SK-N-SH (cell line): ENCODE measurements at regions of chr15 and their contacts with region 1.

Region 1: DNA sequence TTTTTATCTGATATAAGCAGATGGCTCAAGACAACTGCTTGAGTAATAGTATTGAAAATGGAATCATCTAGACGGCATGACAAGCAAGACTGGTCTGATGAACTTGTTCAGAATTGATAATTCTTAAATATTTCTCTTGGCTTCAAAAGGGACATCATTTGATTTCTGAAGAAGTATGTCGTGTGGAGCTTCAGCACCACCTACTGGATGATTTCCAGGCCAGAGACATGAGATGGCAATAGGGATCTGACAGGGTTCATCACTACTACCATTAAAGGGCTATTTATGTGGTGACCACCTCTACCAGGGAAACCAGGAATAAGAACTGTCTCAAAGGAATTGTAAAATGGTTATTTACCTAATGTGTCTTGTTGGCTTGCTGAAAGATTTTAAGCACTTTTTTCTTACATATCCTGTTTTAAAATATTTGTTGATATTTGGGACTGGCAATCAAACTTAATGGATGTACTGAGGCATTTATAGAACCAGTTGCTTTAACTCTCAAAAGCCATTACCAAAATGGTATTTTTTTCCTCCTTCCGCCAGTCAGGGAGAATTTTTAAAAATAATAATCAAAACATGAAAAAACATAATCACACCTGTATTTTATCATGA is 99.5 kb upstream of the FAM98B start:
- DNase-seq: peak; percentile 53
- H3K4me3 ChIP-seq: no peak overlapping the region; a peak in 1 of 4 replicates
- H3K27ac ChIP-seq: no peak overlapping the region; a peak in 1 of 4 replicates
- H3K4me1 ChIP-seq: no peaks in the 10 kb centered on the region; a peak in 1 of 4 replicates
- H3K27me3 ChIP-seq: no peaks in the 10 kb centered on the region
- CTCF ChIP-seq: peak; percentile 85
- EP300 ChIP-seq: no peak
- RAD21 ChIP-seq: peak; percentile 91

Region 2: DNA sequence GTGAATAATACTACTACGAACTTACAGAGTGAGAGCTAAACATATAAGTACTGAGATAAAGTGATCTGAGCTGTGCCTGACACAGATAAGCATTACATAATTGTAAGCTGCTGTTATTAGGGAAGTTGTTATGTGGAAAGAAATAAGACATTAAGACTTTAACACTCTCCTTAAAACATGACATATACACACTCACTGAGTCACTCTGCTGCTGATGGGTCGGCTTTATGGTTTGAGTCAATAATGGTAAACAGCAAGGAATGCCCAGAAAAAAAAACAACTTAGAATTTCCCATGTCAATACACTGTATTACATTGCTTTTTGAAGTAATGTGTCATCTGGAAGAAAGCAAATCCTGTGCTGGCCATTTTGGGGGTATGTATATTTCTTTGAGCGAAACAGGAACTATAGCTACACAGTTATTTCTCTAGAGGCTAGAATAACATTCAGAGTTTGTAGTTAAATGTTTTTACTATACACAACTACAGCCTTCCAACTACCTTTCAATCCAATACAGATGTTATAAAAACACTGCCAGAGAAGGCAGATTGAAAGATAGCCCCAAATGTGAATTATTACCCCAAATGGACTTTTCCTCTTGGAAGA is 124.6 kb before region 1 on chr15:
- CTCF ChIA-PET with region 1: no interaction called
- POLR2A ChIA-PET with region 1: no interaction called
- DNase-seq: no peak
- H3K4me3 ChIP-seq: no peak overlapping the region
- H3K27ac ChIP-seq: no peak overlapping the region
- H3K4me1 ChIP-seq: peaks cover 5 to 6% of the 10 kb centered on the region in 2 experiments; a peak in 3 of 4 replicates
- H3K27me3 ChIP-seq: no peaks in the 10 kb centered on the region
- CTCF ChIP-seq: no peak
- EP300 ChIP-seq: no peak
- RAD21 ChIP-seq: no peak

Region 3: GRCh38 chr15:38252481-38253412 is 101.7 kb before region 1 on chr15 and contains the start of gene SPRED1:
- CTCF ChIA-PET with region 1: interaction called, 18 read pairs
- POLR2A ChIA-PET with region 1: interaction called, 9 read pairs
- DNase-seq: peak; percentile 76
- H3K4me3 ChIP-seq: peak within 1 kb of the TSS; percentile 91
- H3K27ac ChIP-seq: peak within 1 kb of the TSS; percentile 89 to 97
- H3K4me1 ChIP-seq: peaks cover 17 to 19% of the 10 kb centered on the region in 2 experiments; a peak in 3 of 4 replicates
- H3K27me3 ChIP-seq: no peaks in the 10 kb centered on the region
- CTCF ChIP-seq: no peak
- EP300 ChIP-seq: no peak
- RAD21 ChIP-seq: 0 out of 2 replicates have a peak, but pooled peaks have one; percentile 4
- polyA plus RNA-seq, gene SPRED1: 4.3 and 4.4 TPM in 2 replicates

Region 4: DNA sequence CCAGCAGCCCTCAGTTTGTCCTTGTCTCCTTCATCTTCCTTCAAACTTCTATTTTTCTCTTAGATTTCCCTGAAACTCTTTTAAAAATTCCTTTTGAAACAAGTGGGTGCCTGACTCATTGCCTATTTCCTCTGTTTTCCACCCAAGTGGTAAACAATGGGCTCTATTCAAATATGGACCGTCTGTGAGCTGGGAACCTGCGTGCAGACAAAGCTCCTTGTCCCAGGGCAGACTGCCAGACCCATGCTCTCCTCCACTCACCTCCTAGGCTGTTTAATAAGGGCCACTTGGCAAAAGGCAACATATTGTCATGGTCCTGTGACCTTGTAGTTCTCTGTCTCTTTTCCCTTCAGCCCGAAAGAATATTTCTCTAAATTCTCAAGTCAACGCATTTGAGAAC is 893.8 kb after region 1 on chr15:
- CTCF ChIA-PET with region 1: no interaction called
- POLR2A ChIA-PET with region 1: no interaction called
- DNase-seq: no peak
- H3K4me3 ChIP-seq: no peak overlapping the region
- H3K27ac ChIP-seq: peak overlapping the region in 1 of 2 experiments; percentile 92; a peak in 2 of 4 replicates
- H3K4me1 ChIP-seq: peaks cover 0 to 45% of the 10 kb centered on the region in 2 experiments; a peak in 3 of 4 replicates
- H3K27me3 ChIP-seq: no peaks in the 10 kb centered on the region
- CTCF ChIP-seq: no peak
- EP300 ChIP-seq: no peak
- RAD21 ChIP-seq: no peak